HepG2 (cell line): ENCODE measurements at regions of chr9 and their contacts with region 1.

Region 1: GRCh38 chr9:14532716-14533115 is 160.5 kb downstream of the ZDHHC21 start:
- DNase-seq: peak; percentile 54
- ATAC-seq: peak; percentile 76
- H3K4me3 ChIP-seq: no peak overlapping the region; a peak in 1 of 6 replicates
- H3K27ac ChIP-seq: no peak overlapping the region
- H3K4me1 ChIP-seq: peaks cover 27% of the 10 kb centered on the region
- H3K27me3 ChIP-seq: peaks cover 2 to 5% of the 10 kb centered on the region in 2 experiments; a peak in 2 of 5 replicates
- CTCF ChIP-seq: no peak
- EP300 ChIP-seq: no peak
- POLR2A ChIP-seq: no peak
- RAD21 ChIP-seq: no peak

Region 2: DNA sequence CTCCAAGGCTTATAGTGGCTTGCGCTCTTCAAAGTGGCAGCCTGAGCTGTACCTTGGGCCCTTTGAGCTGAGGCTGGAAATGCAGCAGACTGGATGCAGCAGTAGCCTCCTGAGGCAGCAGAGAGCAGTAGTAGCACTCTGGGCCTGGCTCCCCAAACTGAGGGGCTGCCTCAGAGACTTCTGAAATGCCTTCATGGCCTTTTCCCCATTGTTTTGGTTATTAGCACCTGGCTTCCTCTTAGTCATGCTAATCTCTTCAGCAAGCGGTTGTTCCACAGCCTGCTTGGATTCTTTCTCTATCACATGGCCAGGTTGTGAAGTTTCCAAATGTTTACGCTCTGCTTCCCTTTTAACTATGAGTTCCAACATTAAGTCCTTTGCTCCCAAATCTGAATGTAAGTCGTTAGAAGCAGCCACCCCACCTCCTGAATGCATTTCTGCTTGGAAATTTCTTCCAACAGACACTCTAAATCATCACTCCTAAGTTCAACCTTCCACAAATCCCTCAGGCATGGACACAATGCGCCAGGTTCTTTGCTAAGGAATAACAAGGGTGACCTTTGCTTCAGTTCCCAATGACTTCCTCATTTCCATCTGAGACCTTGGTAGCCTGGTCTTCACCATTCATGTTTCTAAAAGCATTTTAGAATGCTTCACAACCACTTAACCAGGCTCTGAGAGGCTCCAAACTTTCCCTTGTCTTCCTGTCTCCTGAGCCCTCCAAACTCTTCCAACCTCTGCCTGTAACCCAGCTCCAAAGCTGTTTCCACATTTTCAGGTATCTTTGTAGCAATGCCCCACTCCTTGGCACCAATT is 14.7 kb after region 1 on chr9:
- CTCF ChIA-PET with region 1: no interaction called
- POLR2A ChIA-PET with region 1: no interaction called
- in situ Hi-C with region 1: no loop called
- intact Hi-C with region 1: no loop called
- DNase-seq: no peak
- ATAC-seq: peak; percentile 94
- H3K4me3 ChIP-seq: no peak overlapping the region
- H3K27ac ChIP-seq: no peak overlapping the region
- H3K4me1 ChIP-seq: 0 out of 2 replicates have a peak, but pooled peaks cover 4% of the 10 kb centered on the region
- H3K27me3 ChIP-seq: no peaks in the 10 kb centered on the region
- CTCF ChIP-seq: peak; percentile 31
- EP300 ChIP-seq: no peak
- POLR2A ChIP-seq: no peak
- RAD21 ChIP-seq: no peak

Region 3: DNA sequence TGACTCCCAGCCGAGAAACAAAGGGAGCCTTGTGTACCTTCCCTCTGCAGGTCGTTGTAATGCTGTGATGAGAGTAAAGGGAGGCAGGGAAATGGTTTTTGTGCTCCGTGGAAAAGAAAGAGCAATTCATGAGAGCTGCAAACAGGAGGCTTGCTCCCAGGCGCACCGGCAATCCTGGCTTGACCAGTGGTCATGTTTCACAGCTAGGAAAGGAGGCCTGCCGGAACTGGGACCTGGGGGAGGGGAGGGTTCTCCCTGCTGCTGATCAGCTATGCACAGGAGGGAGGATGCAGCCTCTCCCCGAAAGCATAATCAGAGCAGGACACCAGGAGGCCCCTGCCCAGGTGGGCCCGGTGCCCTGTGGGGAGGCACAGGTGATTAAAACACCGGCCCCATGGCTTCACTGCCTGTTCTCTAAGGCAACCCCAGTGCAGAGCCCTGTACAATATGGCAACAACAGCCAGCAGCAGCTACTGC is 29.3 kb after region 1 on chr9:
- CTCF ChIA-PET with region 1: no interaction called
- POLR2A ChIA-PET with region 1: no interaction called
- in situ Hi-C with region 1: no loop called
- intact Hi-C with region 1: loop called (anchors 1 kb)
- DNase-seq: peak; percentile 81
- ATAC-seq: peak; percentile 94
- H3K4me3 ChIP-seq: peak overlapping the region; percentile 38 to 59 (median 46)
- H3K27ac ChIP-seq: peak overlapping the region; percentile 49
- H3K4me1 ChIP-seq: peaks cover 64% of the 10 kb centered on the region
- H3K27me3 ChIP-seq: no peaks in the 10 kb centered on the region
- CTCF ChIP-seq: no peak
- EP300 ChIP-seq: no peak
- POLR2A ChIP-seq: no peak
- RAD21 ChIP-seq: no peak